ENCODE measurements at regions of chr3 and their contacts with region 1.

Region 1: DNA sequence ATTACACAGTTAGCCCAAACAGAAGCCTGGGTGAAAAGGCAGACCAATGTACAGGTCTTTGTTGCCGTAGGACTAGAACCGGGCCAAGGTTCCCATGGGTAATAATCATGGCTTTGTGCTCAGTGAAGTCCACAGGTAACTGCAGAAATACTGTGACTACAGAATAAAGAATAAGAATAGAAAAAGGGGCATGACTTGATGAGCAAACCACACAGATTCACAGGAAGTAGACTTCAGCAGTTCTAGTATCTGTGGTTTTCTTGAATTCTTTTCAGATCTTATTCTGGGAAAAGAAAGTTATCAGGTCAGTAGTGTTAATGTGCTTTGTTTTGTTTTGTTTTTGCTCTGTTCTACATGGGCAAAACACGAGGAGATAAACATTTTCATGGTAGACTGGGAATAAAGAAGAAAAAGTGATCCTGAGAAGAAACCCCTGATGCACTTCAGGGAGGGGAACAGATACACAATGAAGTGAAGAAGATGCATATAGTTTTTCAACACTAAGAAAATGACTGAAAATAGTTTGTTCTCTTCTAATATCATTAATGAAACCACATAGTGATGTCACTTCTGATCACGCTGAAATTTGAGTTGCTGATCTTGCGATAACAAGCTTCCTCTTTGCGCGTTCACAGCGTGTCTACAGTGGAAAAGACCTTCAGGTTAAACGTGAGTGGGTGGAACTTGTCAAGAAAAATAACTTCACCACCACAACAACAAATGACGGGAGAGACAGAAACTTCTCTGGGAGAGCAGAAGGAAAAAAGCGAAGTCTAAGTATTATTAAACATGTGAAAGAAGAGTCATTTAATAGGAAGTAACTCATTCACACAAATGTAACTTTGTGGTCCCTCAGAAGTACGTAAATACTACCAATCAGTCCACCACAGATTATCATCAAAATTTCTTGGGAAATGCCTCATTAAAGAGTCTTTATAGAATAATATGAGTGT is 315.8 kb upstream of the SATB1 start:
- DNase-seq: peak; percentile 76
- ATAC-seq: peak; percentile 36
- H3K4me3 Mint-ChIP-seq: peak overlapping the region; percentile 58
- H3K27ac Mint-ChIP-seq: peak overlapping the region; percentile 94
- H3K4me1 Mint-ChIP-seq: peaks cover 94% of the 10 kb centered on the region
- H3K27me3 Mint-ChIP-seq: no peaks in the 10 kb centered on the region

Region 2: GRCh38 chr3:18424729-18425640 is 315.9 kb before region 1 on chr3 and contains the start of gene SATB1:
- CTCF ChIA-PET with region 1: no interaction called
- POLR2A ChIA-PET with region 1: interaction called, 3 read pairs
- intact Hi-C with region 1: loop called in 1 of 2 experiments (anchors 1 kb)
- DNase-seq: peak; percentile 84
- ATAC-seq: peak; percentile 15
- H3K4me3 Mint-ChIP-seq: peak within 1 kb of the TSS; percentile 85
- H3K27ac Mint-ChIP-seq: peak within 1 kb of the TSS; percentile 97
- H3K4me1 Mint-ChIP-seq: peaks cover 71% of the 10 kb centered on the region
- H3K27me3 Mint-ChIP-seq: no peaks in the 10 kb centered on the region
- total RNA-seq, gene SATB1: 471 to 590 TPM

Region 3: DNA sequence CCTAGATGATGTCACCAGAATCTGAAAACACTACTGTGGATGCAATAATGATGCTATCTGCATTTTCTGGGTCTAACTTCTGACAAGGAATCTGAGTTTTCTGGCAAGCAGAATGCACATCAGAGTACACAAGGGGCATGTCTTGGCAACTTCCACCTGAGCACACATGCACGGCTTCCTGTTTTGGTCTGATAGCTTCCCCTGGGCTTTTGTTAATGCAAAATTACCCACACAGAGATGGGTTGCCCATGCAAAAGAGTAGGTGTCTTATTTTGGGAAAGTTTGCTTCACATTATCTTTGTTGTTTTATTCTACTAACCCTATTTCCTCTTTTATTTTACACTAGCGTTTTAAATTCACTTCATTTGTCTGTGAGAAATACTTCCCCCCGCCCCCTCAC is 241.6 kb before region 1 on chr3:
- CTCF ChIA-PET with region 1: no interaction called
- POLR2A ChIA-PET with region 1: no interaction called
- intact Hi-C with region 1: loop called in 1 of 2 experiments (anchors 5 kb)
- DNase-seq: peak; percentile 15
- ATAC-seq: peak; percentile 51
- H3K4me3 Mint-ChIP-seq: peak overlapping the region; percentile 24
- H3K27ac Mint-ChIP-seq: peak overlapping the region; percentile 69
- H3K4me1 Mint-ChIP-seq: peaks cover 46% of the 10 kb centered on the region
- H3K27me3 Mint-ChIP-seq: no peaks in the 10 kb centered on the region

Region 4: DNA sequence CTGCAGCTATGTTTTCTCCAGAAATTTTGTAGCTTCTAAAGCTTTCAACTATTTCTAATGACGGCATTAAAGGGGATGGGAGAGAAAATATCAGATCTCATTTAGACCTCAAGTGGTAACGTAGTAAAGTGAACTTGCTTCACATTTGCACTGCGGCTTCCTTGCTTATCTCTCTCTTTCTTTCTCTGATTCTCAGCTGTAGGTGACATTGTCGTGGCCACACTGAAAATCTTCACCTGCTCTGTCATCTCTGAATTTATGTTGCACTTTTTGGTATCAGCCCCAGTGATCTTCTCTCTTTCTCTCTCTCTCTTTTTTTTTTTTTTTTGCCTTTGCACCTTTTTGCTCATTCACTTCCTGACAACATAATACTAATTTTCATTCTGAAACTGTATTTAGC is 61.7 kb before region 1 on chr3:
- CTCF ChIA-PET with region 1: interaction called, 14 read pairs
- POLR2A ChIA-PET with region 1: interaction called, 13 read pairs
- intact Hi-C with region 1: loop called (anchors 1 kb)
- DNase-seq: peak; percentile 69
- ATAC-seq: peak; percentile 87
- H3K4me3 Mint-ChIP-seq: peak overlapping the region; percentile 28
- H3K27ac Mint-ChIP-seq: peak overlapping the region; percentile 94
- H3K4me1 Mint-ChIP-seq: peaks cover 84% of the 10 kb centered on the region
- H3K27me3 Mint-ChIP-seq: no peaks in the 10 kb centered on the region

Region 5: DNA sequence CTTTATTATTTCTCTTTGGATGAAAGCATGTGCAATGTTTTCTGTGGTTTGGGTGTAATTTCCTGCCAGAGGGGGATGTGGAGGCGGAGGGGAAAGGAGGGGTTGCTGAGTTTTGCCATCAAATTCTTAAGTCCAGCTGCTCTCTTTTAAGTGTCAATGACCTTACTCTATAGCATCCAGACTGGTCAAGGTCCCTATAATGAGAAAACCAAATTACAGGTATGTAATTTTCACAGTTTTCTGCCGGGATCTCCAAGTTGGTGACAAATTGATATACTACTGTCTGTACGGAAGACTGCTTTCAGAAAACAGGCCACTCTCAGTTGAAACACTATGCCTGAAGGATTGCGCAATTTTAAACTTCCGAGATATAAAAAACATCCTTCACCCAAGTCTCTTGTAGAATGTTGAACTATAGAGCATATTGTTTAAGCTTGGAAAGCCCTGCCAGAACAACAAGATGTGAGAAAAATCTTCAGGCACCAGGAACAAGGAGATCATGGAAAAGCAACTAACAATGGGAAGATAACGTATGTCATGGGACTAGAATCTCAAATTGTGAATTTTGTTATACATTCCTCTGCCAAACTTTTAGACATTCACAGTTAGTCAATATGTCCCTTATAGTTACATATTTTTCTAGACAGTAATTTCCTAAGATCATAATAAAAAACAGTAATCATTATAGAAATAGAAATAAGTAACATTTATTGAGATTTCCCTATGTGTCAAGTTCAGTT is 15.1 kb before region 1 on chr3:
- CTCF ChIA-PET with region 1: interaction called, 6 read pairs
- POLR2A ChIA-PET with region 1: interaction called, 17 read pairs
- intact Hi-C with region 1: loop called (anchors 1 kb)
- DNase-seq: peak; percentile 58
- ATAC-seq: peak; percentile 62
- H3K4me3 Mint-ChIP-seq: peak overlapping the region; percentile 51
- H3K27ac Mint-ChIP-seq: peak overlapping the region; percentile 94
- H3K4me1 Mint-ChIP-seq: peaks cover 71% of the 10 kb centered on the region
- H3K27me3 Mint-ChIP-seq: no peaks in the 10 kb centered on the region

Region 6: DNA sequence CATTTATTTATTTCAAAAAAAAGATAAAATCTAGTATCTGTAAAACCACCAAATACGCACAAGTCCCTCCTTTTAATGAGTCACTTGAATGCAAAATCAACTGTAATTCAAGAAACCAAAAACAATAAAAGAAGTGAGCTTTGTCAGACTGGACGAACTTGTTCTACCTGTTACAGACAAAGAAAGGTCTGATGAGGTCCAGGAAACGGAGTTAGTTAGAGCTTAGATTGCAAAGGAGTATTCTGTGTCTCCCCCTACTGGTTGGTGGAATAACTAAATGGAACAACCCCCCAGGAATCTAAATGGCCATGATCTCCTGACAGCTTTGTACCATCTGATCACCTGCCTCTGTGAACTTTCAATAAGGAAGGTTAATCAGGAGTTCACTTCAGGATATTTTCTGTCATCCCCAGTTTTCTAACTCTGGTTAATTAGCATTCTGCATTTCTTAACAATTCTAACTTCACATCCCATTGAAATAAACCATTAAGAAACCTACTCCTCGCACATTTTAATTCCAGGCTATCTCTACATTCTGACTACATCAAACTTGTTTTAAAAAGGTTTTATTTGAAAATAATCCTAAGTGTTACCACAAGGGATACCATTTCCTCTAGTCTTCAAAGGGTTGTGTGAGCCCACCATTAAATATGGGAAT is 17.3 kb after region 1 on chr3:
- CTCF ChIA-PET with region 1: interaction called, 19 read pairs
- POLR2A ChIA-PET with region 1: interaction called, 10 read pairs
- intact Hi-C with region 1: loop called (anchors 1 kb)
- DNase-seq: no peak
- ATAC-seq: peak; percentile 95
- H3K4me3 Mint-ChIP-seq: no peak overlapping the region
- H3K27ac Mint-ChIP-seq: peak overlapping the region; percentile 90
- H3K4me1 Mint-ChIP-seq: peaks cover 48% of the 10 kb centered on the region
- H3K27me3 Mint-ChIP-seq: no peaks in the 10 kb centered on the region

Measured in activated CD4-positive, alpha-beta T cell treated with anti-CD3 and anti-CD28 coated beads for 36 hours (primary cell).